Activated B cell treated with CpG ODN at 0.5 μM for 24 hours (primary cell): ENCODE measurements at regions of chr3 and their contacts with region 1.

Region 1: DNA sequence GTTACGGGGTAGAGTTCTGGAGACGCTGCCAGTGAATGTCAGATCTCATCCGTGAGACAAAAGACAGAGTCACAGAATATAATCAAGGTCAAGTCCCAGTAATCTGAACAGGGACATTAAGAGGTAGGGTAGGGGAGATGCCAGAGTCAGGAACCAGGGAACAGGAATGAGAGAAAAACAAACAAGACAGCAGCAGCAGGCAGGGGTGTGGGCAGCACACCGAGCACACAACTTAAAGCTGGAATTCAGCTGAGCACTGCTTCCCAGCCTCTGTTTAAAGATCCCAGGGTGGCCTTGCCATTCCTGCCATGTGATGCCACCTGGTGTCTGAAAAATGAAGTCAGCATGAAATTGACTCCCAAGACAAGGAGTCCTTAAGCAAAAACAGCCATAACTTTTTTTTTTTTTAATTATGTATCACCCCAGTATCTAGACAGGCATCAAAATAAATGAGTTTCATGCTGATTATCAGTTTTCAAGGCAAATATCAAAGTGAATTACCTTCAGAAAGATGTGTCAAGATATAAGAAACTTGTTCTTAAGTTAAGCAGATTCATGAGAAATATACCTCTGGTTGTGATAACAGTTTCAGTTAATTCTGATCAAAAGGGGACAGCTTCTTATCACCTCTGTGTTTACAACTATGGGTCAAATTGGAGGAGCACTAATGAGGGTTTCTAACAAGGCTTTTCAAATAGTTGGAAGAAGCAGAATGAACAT is 203.7 kb downstream of the SLC9A9 start:
- DNase-seq: no peak
- ATAC-seq: peak; percentile 45
- H3K4me3 Mint-ChIP-seq: no peak overlapping the region
- H3K27ac Mint-ChIP-seq: peak overlapping the region; percentile 50
- H3K4me1 Mint-ChIP-seq: peaks cover 14% of the 10 kb centered on the region
- H3K27me3 Mint-ChIP-seq: no peaks in the 10 kb centered on the region
- CTCF ChIP-seq: no peak

Region 2: GRCh38 chr3:143040261-143040879 is 604.2 kb before region 1 on chr3:
- CTCF ChIA-PET with region 1: interaction called, 4 read pairs
- POLR2A ChIA-PET with region 1: interaction called, 3 read pairs
- intact Hi-C with region 1: loop called (anchors 1 kb)
- DNase-seq: no peak
- ATAC-seq: no peak
- H3K4me3 Mint-ChIP-seq: no peak overlapping the region
- H3K27ac Mint-ChIP-seq: no peak overlapping the region
- H3K4me1 Mint-ChIP-seq: peaks cover 3% of the 10 kb centered on the region
- H3K27me3 Mint-ChIP-seq: no peaks in the 10 kb centered on the region
- CTCF ChIP-seq: no peak

Region 3: GRCh38 chr3:143348486-143349327 is 295.8 kb before region 1 on chr3:
- CTCF ChIA-PET with region 1: no interaction called
- POLR2A ChIA-PET with region 1: no interaction called
- intact Hi-C with region 1: loop called (anchors 10 kb)
- DNase-seq: no peak
- ATAC-seq: no peak
- H3K4me3 Mint-ChIP-seq: peak overlapping the region; percentile 16
- H3K27ac Mint-ChIP-seq: no peak overlapping the region
- H3K4me1 Mint-ChIP-seq: peaks cover 55% of the 10 kb centered on the region
- H3K27me3 Mint-ChIP-seq: no peaks in the 10 kb centered on the region
- CTCF ChIP-seq: no peak

Region 4: GRCh38 chr3:143433787-143434378 is 210.6 kb before region 1 on chr3:
- CTCF ChIA-PET with region 1: interaction called, 21 read pairs
- POLR2A ChIA-PET with region 1: no interaction called
- intact Hi-C with region 1: loop called (anchors 1 kb)
- DNase-seq: no peak
- ATAC-seq: no peak
- H3K4me3 Mint-ChIP-seq: no peak overlapping the region
- H3K27ac Mint-ChIP-seq: no peak overlapping the region
- H3K4me1 Mint-ChIP-seq: peaks cover 24% of the 10 kb centered on the region
- H3K27me3 Mint-ChIP-seq: no peaks in the 10 kb centered on the region
- CTCF ChIP-seq: no peak

Region 5: GRCh38 chr3:143718463-143718862 is 73.9 kb after region 1 on chr3:
- CTCF ChIA-PET with region 1: no interaction called
- POLR2A ChIA-PET with region 1: no interaction called
- intact Hi-C with region 1: no loop called
- DNase-seq: no peak
- ATAC-seq: no peak
- H3K4me3 Mint-ChIP-seq: no peak overlapping the region
- H3K27ac Mint-ChIP-seq: no peak overlapping the region
- H3K4me1 Mint-ChIP-seq: no peaks in the 10 kb centered on the region
- H3K27me3 Mint-ChIP-seq: no peaks in the 10 kb centered on the region
- CTCF ChIP-seq: no peak

Region 6: DNA sequence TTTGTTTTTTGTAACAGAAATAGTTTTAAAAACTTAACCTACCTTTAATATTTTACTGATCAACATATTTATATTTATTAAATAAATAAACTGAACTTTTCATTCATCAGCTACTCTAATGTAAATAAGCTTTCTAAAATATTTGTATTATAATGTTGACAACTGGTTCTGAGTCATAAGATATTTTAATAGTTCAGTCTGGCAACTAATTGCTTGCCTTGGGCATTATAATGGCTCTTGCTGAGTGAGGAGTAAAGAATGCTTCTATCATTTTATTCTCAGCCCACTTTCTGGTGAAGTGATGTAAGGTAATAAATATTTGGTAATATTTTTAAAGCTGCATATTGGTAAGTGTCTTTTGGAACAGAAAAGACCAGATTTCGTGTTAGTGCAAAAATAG is 408.6 kb after region 1 on chr3:
- CTCF ChIA-PET with region 1: no interaction called
- POLR2A ChIA-PET with region 1: no interaction called
- intact Hi-C with region 1: no loop called
- DNase-seq: no peak
- ATAC-seq: no peak
- H3K4me3 Mint-ChIP-seq: no peak overlapping the region
- H3K27ac Mint-ChIP-seq: no peak overlapping the region
- H3K4me1 Mint-ChIP-seq: no peaks in the 10 kb centered on the region
- H3K27me3 Mint-ChIP-seq: peaks cover 9% of the 10 kb centered on the region
- CTCF ChIP-seq: no peak